Cardiac septum (tissue), 1 donor: ENCODE measurements at regions of chr4 and their contacts with region 1.

Region 1: GRCh38 chr4:48779998-48780742 is at the start of gene FRYL:
- DNase-seq: peak; percentile 100
- total RNA-seq, gene FRYL: 41.0 TPM

Region 2: GRCh38 chr4:48578132-48578968 is 201.8 kb before region 1 on chr4:
- intact Hi-C with region 1: loop called (anchors 5 kb)
- DNase-seq: no peak

Region 3: DNA sequence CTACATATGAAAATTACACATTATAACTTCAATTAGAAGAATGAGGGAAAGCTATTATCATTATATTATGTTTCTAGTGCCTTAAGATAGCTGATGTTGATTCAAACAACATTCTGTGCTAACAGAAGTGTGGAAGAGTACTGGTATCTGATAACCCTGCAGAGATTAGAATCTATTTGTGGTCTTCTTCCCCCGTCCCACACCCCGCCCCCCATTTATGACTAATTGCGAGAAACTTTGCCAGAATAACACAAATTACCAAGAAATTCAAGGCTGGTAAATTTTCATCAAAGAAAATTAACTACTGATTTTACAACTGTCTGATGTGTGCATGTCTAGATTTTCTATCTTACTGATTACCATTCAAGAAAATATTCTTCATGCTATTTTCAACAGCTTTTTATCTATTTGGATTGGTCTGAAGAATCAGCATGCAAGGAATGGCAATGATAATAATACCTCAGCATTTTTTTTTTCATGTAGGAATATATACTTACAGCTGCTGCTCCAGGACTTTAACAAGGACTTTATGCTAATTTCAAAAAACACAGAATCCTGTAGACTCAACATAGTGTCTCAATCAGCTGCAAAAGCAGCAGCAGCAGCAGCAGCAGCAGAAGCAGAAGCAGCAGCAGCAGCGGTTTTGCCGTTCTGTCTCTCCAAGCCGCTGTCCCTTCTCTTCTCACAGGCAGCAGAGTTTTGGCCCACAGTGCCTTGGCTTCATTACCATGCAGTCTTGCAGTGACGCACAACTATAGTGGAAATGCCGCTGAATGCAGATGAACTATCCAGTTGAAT is 126.8 kb before region 1 on chr4:
- intact Hi-C with region 1: loop called (anchors 5 kb)
- DNase-seq: peak; percentile 82

Region 4: DNA sequence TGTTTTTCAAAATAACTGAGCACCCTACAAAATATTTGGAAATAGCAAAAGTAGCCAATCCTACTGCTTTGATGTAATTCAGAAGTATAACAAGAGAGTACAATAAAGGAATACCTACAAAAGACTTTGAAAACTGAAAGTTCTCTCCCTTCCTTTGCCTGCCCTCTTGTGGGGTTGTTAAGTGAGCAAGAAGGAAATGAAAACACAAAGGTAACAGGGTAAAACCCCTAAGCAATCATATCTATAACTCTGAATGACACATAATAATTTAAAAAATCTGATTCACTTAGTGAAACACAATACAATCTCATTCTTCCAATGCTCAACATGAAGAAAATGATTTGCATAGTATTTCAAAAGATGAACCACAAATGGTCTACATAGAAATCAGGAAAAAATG is 98.3 kb before region 1 on chr4:
- intact Hi-C with region 1: loop called (anchors 10 kb)
- DNase-seq: no peak

Region 5: GRCh38 chr4:48722509-48723446 is 57.4 kb before region 1 on chr4:
- intact Hi-C with region 1: loop called (anchors 10 kb)
- DNase-seq: no peak

Region 6: GRCh38 chr4:48830706-48831531 is 50.7 kb after region 1 on chr4 and contains the start of gene OCIAD1:
- intact Hi-C with region 1: loop called (anchors 1 kb)
- DNase-seq: peak; percentile 97
- total RNA-seq, gene OCIAD1: 137 TPM